Mammary epithelial cell (primary cell): ENCODE measurements at regions of chr10 and their contacts with region 1.

Region 1: DNA sequence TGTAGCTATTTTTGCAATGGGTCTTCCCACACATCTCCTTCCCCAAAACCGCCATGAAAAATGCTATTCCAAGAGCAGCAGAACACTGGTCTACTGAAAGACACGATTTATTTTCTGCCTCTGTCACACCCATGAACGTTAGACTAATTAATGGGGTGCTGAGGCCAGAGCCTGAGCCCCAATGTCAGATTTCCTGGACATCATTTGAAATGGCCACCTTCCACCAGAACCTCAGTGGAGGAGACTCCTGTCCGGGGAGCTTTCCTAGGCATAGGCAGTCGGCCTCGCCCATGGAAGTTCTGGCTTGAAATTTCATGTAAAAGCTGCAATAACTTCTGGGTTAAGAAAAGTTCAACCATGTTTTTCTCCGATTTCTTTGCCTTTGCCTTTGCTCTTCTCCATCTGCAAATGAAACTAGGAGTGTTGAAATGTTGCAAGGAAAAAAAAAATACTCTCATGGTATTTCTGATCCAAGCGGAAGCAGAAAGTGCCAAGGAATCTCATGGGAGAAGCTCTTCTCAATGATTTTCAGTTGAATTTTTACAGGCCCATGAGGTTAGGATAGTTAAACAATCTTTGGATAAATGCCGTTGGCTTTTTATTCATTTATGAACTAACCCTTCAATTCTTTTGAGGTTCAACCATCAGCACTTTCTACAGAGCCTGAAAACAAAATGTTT is 570.8 kb upstream of the MGMT start:
- DNase-seq: no peak
- H3K4me3 ChIP-seq: no peak overlapping the region
- H3K27ac ChIP-seq: no peak overlapping the region
- H3K4me1 ChIP-seq: no peaks in the 10 kb centered on the region
- H3K27me3 ChIP-seq: no peaks in the 10 kb centered on the region
- CTCF ChIP-seq: no peak

Region 2: GRCh38 chr10:128498378-128498730 is 397.9 kb before region 1 on chr10:
- CTCF ChIA-PET with region 1: no interaction called
- dilution Hi-C with region 1: loop called (anchors 10 kb)
- in situ Hi-C with region 1: no loop called
- intact Hi-C with region 1: no loop called
- DNase-seq: no peak
- H3K4me3 ChIP-seq: no peak overlapping the region
- H3K27ac ChIP-seq: no peak overlapping the region
- H3K4me1 ChIP-seq: no peaks in the 10 kb centered on the region
- H3K27me3 ChIP-seq: no peaks in the 10 kb centered on the region
- CTCF ChIP-seq: no peak

Region 3: GRCh38 chr10:128793726-128794655 is 102.3 kb before region 1 on chr10:
- CTCF ChIA-PET with region 1: no interaction called
- dilution Hi-C with region 1: no loop called
- in situ Hi-C with region 1: no loop called
- intact Hi-C with region 1: no loop called
- DNase-seq: no peak
- H3K4me3 ChIP-seq: no peak overlapping the region
- H3K27ac ChIP-seq: no peak overlapping the region
- H3K4me1 ChIP-seq: no peaks in the 10 kb centered on the region
- H3K27me3 ChIP-seq: no peaks in the 10 kb centered on the region
- CTCF ChIP-seq: no peak